Heart left ventricle (tissue), 16 donors: ENCODE measurements at regions of chr3 and their contacts with region 1.

Region 1: GRCh38 chr3:183895296-183895695 is 10.6 kb upstream of the PARL start:
- DNase-seq: no peak
- ATAC-seq: peak in 3 of 4 donors; percentile 62 to 68 (median 64)
- H3K4me3 ChIP-seq: no peak overlapping the region
- H3K27ac ChIP-seq: no peak overlapping the region
- H3K4me1 ChIP-seq: no peaks in the 10 kb centered on the region
- H3K27me3 ChIP-seq: peaks cover 0 to 6% (median 0%) of the 10 kb centered on the region in 9 donors
- CTCF ChIP-seq: peak; percentile 64 to 83 (median 78)
- POLR2A ChIP-seq: no peak

Region 2: DNA sequence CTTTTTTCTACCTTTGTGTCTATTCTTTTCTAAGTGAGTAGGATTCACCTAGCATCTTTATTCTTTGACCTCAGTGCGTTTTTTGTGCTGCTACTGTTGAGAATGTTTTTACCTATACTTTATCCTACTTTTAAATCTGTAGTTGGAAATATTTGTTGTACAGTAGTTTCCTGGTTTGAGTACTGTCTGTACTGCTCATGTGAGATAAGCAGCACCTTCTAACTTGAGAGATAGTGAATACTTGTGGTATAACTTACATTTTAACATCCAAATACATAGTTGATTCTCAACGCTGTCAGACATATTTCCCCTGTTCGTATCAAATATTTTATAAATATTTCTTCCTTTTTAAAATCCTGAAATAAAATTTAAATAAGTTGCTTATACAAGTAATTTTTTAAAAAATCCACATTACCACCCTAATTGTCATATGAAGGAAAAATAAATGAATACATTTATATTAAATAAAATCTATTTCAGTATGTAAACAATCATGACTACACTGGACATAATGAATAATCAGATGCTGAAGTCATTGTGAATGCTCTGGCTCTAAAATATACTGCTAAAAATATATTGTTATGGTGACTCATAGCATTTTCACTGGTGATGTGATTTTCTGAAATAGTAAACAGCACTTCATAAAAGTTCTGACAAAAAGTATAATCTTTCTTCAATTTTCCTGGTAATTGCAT is 1084.6 kb before region 1 on chr3:
- intact Hi-C with region 1: no loop called
- DNase-seq: no peak
- ATAC-seq: peak in 2 of 4 donors; percentile 41 to 62
- H3K4me3 ChIP-seq: no peak overlapping the region
- H3K27ac ChIP-seq: peak overlapping the region in 1 of 12 donors; percentile 13
- H3K4me1 ChIP-seq: peaks cover 0 to 45% (median 26%) of the 10 kb centered on the region in 12 donors
- H3K27me3 ChIP-seq: no peaks in the 10 kb centered on the region
- CTCF ChIP-seq: no peak
- POLR2A ChIP-seq: no peak

Region 3: GRCh38 chr3:184017672-184018423 is 122.6 kb after region 1 on chr3 and contains the start of gene ABCC5:
- intact Hi-C with region 1: loop called in 7 of 10 experiments (anchors 2 to 5 kb)
- DNase-seq: peak; percentile 94 to 97 (median 96)
- ATAC-seq: peak; percentile 96 to 98 (median 98)
- H3K4me3 ChIP-seq: peak within 1 kb of the TSS; percentile 59 to 99 (median 89)
- H3K27ac ChIP-seq: peak within 1 kb of the TSS; percentile 71 to 93 (median 84)
- H3K4me1 ChIP-seq: peaks cover 0 to 29% (median 15%) of the 10 kb centered on the region in 12 donors
- H3K27me3 ChIP-seq: no peaks in the 10 kb centered on the region
- CTCF ChIP-seq: peak in 9 of 12 donors; percentile 3 to 54 (median 41)
- POLR2A ChIP-seq: peak in 1 of 2 donors; percentile 67
- total RNA-seq, gene ABCC5: 20.8 to 61.7 (median 34.3) TPM

Region 4: GRCh38 chr3:184241447-184242296 is 346.4 kb after region 1 on chr3:
- intact Hi-C with region 1: loop called in 7 of 10 experiments (anchors 5 to 10 kb)
- DNase-seq: peak in 2 of 5 donors; percentile 51 to 65
- ATAC-seq: peak; percentile 61 to 77 (median 70)
- H3K4me3 ChIP-seq: no peak overlapping the region
- H3K27ac ChIP-seq: no peak overlapping the region
- H3K4me1 ChIP-seq: peaks cover 0 to 8% (median 5%) of the 10 kb centered on the region in 12 donors
- H3K27me3 ChIP-seq: peaks cover 0 to 3% (median 0%) of the 10 kb centered on the region in 9 donors
- CTCF ChIP-seq: peak in 11 of 12 donors; percentile 29 to 61 (median 46)
- POLR2A ChIP-seq: no peak

Region 5: DNA sequence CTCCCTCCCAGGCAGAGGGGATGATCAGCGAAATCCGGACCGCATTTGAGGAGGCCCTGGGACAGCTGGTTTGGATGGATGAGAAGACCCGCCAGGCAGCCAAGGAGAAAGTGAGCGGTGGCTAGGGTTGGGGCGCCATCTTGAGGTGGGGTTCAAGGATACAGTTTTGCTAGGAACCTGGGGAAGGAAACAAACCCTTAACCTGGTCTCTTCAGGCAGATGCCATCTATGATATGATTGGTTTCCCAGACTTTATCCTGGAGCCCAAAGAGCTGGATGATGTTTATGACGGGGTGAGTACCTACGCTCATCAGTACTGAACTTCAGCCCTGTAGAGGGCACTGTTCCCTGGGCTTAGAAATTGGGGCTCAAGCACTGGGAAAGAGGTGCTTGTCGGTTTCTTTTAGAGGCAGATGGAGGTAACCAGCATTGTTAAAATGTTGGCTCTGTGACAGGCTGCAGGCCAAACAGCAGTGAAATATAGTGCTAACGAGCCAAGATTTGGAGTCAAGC is 394.2 kb after region 1 on chr3:
- intact Hi-C with region 1: loop called in 9 of 10 experiments (anchors 1 to 10 kb)
- DNase-seq: peak in 2 of 5 donors; percentile 40 to 44
- ATAC-seq: peak; percentile 14 to 54 (median 47)
- H3K4me3 ChIP-seq: no peak overlapping the region
- H3K27ac ChIP-seq: no peak overlapping the region
- H3K4me1 ChIP-seq: peaks cover 0 to 7% (median 0%) of the 10 kb centered on the region in 12 donors
- H3K27me3 ChIP-seq: peaks cover 0 to 10% (median 3%) of the 10 kb centered on the region in 9 donors
- CTCF ChIP-seq: peak in 11 of 12 donors; percentile 36 to 66 (median 53)
- POLR2A ChIP-seq: no peak

Region 6: DNA sequence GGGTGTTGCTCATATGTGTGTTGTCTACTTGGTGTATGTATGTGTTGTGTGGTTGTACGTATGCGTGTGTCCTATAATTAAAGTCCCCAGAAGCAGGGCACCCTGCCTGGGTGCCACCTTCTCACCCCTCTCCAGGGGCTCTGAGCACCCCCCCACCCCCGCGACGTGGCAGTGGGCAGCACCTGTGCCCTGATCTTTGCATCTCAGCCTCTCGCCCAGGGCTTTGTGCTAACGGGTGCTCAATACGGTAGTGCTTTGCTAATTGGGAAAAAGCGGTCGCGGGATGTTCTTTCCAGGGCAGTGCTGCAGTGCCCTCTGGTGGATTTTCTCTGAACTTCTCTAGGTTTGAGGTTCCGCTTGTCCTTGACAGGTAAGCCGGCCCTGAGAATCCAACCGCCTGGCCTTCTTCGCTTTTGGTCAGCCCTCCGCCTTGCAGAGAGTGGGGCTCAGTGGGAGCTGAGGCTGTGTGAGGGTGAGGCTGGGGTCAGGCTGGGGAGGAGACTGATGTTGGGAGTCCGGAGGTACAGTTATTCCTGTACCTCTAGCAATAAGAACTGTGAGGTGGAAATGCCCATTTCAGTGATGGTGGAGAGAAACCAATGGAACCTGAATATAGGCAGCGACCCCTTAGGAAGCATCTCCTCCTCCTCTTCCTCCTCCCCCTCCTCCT is 648.7 kb after region 1 on chr3:
- intact Hi-C with region 1: loop called in 2 of 10 experiments (anchors 10 kb)
- DNase-seq: peak in 4 of 5 donors; percentile 50 to 73 (median 68)
- ATAC-seq: peak; percentile 35 to 81 (median 80)
- H3K4me3 ChIP-seq: no peak overlapping the region
- H3K27ac ChIP-seq: no peak overlapping the region
- H3K4me1 ChIP-seq: peaks cover 0 to 22% (median 3%) of the 10 kb centered on the region in 12 donors
- H3K27me3 ChIP-seq: peaks cover 0 to 32% (median 11%) of the 10 kb centered on the region in 9 donors
- CTCF ChIP-seq: peak; percentile 83 to 96 (median 92)
- POLR2A ChIP-seq: no peak